ENCODE measurements at regions of chr22 and their contacts with region 1.

Region 1: DNA sequence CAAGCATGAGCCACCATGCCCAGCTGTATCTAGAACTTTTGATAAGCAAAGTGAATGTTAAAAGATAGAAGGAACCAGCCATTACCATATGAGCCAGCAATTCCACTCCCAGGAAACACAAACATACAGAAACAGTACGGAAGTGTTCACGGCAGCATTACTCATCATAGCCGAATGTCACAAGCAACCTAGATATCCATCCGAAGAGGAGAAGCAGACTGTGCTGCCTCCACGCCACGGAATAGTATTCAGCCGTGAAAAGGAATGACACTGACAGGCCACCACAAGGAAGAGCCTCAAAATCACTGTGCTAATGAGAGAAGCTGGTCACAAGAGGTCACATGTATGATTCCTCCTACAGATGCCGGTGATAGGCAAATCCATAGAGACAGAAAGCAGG is 17.6 kb upstream of the MGAT3 start:
- DNase-seq: no peak
- ATAC-seq: no peak
- H3K4me3 Mint-ChIP-seq: no peak overlapping the region
- H3K27ac Mint-ChIP-seq: no peak overlapping the region
- H3K4me1 Mint-ChIP-seq: peaks cover 9% of the 10 kb centered on the region
- H3K27me3 Mint-ChIP-seq: peaks cover 6% of the 10 kb centered on the region

Region 2: GRCh38 chr22:39405346-39406085 is 33.7 kb before region 1 on chr22:
- CTCF ChIA-PET with region 1: no interaction called
- POLR2A ChIA-PET with region 1: no interaction called
- intact Hi-C with region 1: loop called in 1 of 2 experiments (anchors 5 kb)
- DNase-seq: peak; percentile 74
- ATAC-seq: peak; percentile 81
- H3K4me3 Mint-ChIP-seq: peak overlapping the region; percentile 13
- H3K27ac Mint-ChIP-seq: no peak overlapping the region
- H3K4me1 Mint-ChIP-seq: peaks cover 71% of the 10 kb centered on the region
- H3K27me3 Mint-ChIP-seq: no peaks in the 10 kb centered on the region

Region 3: GRCh38 chr22:39490135-39490798 is 51.1 kb after region 1 on chr22:
- CTCF ChIA-PET with region 1: no interaction called
- POLR2A ChIA-PET with region 1: no interaction called
- intact Hi-C with region 1: loop called in 1 of 2 experiments (anchors 5 kb)
- DNase-seq: peak; percentile 89
- ATAC-seq: peak; percentile 100
- H3K4me3 Mint-ChIP-seq: no peak overlapping the region
- H3K27ac Mint-ChIP-seq: no peak overlapping the region
- H3K4me1 Mint-ChIP-seq: peaks cover 7% of the 10 kb centered on the region
- H3K27me3 Mint-ChIP-seq: no peaks in the 10 kb centered on the region

Measured in activated CD4-positive, alpha-beta T cell treated with anti-CD3 and anti-CD28 coated beads for 36 hours (primary cell).